Spleen (tissue), 13 donors: ENCODE measurements at regions of chr17 and their contacts with region 1.

Region 1: DNA sequence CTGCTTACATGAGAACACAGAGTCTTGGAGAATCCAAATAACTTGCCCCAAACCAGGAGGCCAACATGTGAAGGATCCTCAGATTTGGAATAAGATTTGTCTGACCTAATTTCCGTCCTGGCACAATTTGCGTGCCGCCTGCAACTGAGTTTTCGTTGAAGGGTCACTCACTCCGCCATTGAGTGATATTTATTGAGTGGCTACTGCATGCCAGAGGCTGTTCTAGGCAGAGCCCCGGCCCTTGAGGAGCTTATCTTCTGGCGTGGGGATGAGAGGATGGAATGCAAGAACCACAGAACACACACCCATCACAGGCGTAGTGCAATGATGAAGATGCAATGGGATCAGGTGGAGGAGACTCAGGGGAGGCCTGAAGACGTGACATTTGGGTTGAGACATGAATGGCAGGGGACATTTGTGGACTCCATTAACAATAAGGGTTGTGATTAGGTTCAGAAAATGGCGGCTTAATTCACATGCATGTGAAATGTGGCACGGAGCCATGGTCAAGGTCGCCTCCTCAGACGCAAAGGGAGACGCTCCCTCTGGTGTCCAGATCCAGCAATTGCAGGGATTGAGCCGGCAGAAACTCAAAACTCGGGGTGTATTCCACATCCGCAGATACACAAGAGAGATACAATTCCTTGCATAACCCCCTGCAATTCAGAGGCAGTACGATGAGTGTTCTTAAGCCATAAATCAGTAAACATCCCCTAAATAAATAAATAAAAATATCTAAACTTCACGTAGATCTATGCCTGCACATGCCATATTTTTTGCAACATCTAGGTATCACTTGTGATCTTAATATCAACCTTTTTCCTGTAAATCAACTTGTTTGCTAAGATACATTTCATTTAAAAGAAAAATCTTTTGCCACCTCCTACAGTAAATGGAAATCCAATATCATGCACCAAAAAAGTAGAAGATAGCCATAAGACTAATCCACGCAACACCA is 57.9 kb upstream of the CACNG4 start:
- DNase-seq: peak; percentile 83
- H3K4me3 ChIP-seq: no peak overlapping the region
- H3K27ac ChIP-seq: no peak overlapping the region
- H3K4me1 ChIP-seq: peaks cover 0 to 6% (median 0%) of the 10 kb centered on the region in 6 donors
- H3K27me3 ChIP-seq: no peaks in the 10 kb centered on the region
- CTCF ChIP-seq: peak; percentile 37 to 88 (median 82)
- POLR2A ChIP-seq: no peak

Region 2: GRCh38 chr17:66715745-66716156 is 190.8 kb before region 1 on chr17:
- intact Hi-C with region 1: loop called (anchors 5 kb)
- DNase-seq: no peak
- H3K4me3 ChIP-seq: no peak overlapping the region
- H3K27ac ChIP-seq: no peak overlapping the region
- H3K4me1 ChIP-seq: peaks cover 0 to 24% (median 0%) of the 10 kb centered on the region in 6 donors
- H3K27me3 ChIP-seq: no peaks in the 10 kb centered on the region
- CTCF ChIP-seq: peak in 10 of 11 experiments; percentile 40 to 74 (median 63)
- POLR2A ChIP-seq: no peak